Ovary (tissue), 10 donors: ENCODE measurements at regions of chr1 and their contacts with region 1.

Region 1: GRCh38 chr1:108828022-108828961 is 28.6 kb downstream of the AKNAD1 start:
- DNase-seq: peak; percentile 55 to 80 (median 69)
- H3K4me3 ChIP-seq: no peak overlapping the region
- H3K27ac ChIP-seq: no peak overlapping the region
- H3K4me1 ChIP-seq: peaks cover 1% of the 10 kb centered on the region
- H3K27me3 ChIP-seq: no peaks in the 10 kb centered on the region
- CTCF ChIP-seq: peak in 2 of 3 donors; percentile 39 to 53
- EP300 ChIP-seq: no peak
- POLR2A ChIP-seq: no peak

Region 2: GRCh38 chr1:108785264-108785663 is 43.0 kb before region 1 on chr1:
- intact Hi-C with region 1: no loop called
- DNase-seq: no peak
- H3K4me3 ChIP-seq: no peak overlapping the region
- H3K27ac ChIP-seq: no peak overlapping the region
- H3K4me1 ChIP-seq: no peaks in the 10 kb centered on the region
- H3K27me3 ChIP-seq: no peaks in the 10 kb centered on the region
- CTCF ChIP-seq: no peak
- EP300 ChIP-seq: no peak
- POLR2A ChIP-seq: no peak

Region 3: GRCh38 chr1:108877348-108878159 is 49.3 kb after region 1 on chr1:
- intact Hi-C with region 1: loop called in 1 of 4 experiments (anchors 10 kb)
- DNase-seq: no peak
- H3K4me3 ChIP-seq: peak overlapping the region; percentile 59
- H3K27ac ChIP-seq: peak overlapping the region in 1 of 2 donors; percentile 7
- H3K4me1 ChIP-seq: peaks cover 1% of the 10 kb centered on the region
- H3K27me3 ChIP-seq: no peaks in the 10 kb centered on the region
- CTCF ChIP-seq: no peak
- EP300 ChIP-seq: no peak
- POLR2A ChIP-seq: no peak

Region 4: DNA sequence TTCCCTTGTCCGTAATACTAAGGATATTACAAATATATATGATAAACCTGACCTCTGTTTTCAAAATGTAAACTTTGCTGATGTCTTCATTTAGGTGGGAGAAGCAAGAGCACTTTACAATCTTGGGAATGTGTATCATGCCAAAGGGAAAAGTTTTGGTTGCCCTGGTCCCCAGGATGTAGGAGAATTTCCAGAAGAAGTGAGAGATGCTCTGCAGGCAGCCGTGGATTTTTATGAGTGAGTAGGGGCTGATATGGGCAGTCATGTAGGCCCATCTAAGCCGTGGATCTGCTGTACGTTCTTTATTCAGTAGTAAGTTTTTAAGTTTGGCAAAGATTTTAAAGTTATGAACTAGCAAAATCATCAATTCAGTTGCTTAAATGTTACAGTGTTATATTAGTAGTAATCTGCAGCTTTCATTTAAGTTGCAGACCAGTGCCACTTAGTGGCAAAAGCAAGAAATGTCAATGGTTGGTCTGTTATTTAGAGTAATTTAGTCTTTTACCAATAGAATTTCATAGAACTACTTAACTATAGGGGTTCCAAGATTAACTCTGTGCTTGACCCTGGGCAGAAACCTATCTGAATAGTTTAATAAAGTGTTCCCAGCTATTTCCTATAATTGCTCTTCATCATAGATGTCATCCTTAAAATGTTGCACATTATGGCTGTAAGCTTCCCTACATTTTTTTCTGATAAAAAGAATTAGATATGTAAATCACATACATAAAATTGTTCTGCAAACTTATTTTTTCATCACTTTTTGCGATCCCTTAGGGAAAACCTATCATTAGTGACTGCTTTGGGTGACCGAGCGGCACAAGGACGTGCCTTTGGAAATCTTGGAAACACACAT is 69.8 kb after region 1 on chr1:
- intact Hi-C with region 1: loop called in 2 of 4 experiments (anchors 5 to 10 kb)
- DNase-seq: peak in 1 of 5 donors; percentile 45
- H3K4me3 ChIP-seq: no peak overlapping the region
- H3K27ac ChIP-seq: no peak overlapping the region
- H3K4me1 ChIP-seq: no peaks in the 10 kb centered on the region
- H3K27me3 ChIP-seq: no peaks in the 10 kb centered on the region
- CTCF ChIP-seq: peak; percentile 54 to 78 (median 71)
- EP300 ChIP-seq: no peak
- POLR2A ChIP-seq: no peak